ENCODE measurements at regions of chr18 and their contacts with region 1.

Region 1: DNA sequence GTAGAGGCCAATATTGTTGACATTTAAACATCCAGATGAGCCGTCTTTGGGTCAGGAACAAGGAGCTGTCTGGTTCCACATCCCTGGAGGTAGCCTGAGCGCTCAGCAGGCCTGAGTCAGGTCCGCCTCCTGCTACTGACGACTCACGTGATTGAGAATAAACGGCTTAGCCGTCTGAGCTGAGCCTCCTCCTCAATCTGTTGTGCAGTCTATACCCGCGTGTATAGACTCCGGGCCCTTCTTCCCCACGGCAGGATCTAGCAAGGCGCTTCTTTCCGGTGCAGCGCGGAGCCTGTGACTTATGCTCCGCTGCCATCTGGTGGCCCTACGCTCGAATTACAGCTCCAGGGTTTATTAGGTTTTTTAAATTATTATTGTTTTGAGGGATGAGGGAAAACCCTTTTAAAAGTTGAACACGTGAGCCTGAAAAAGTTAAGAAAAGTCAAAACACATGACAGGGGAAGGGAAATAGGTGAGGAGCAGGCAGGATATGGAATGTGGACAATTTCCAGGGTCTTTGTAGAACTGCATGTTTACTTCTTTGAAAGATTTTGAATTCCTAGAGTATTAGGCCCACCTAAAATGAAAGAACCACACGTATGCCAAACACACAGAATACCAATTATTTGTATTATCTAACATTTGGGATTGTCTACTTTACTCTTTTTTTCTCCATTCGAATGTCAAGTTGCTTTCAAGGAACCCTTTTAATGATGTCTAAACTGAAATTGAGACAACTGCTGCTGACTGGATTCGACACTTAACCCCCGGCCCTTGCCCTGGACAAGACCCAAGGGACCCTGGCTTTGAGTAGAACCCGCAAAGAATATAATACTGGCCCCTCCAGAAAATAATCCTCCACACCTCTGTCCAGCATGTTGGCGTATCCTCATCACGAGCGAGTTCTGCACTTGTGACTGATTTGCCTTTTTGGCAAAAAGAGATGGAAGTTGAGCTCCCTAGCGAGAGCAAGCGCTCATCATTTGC is 112.4 kb upstream of the ZNF236 start:
- DNase-seq: peak; percentile 75
- ATAC-seq: peak; percentile 99
- H3K4me3 Mint-ChIP-seq: no peak overlapping the region
- H3K27ac Mint-ChIP-seq: no peak overlapping the region
- H3K4me1 Mint-ChIP-seq: no peaks in the 10 kb centered on the region
- H3K27me3 Mint-ChIP-seq: peaks cover 3% of the 10 kb centered on the region
- CTCF ChIP-seq: peak; percentile 97

Region 2: DNA sequence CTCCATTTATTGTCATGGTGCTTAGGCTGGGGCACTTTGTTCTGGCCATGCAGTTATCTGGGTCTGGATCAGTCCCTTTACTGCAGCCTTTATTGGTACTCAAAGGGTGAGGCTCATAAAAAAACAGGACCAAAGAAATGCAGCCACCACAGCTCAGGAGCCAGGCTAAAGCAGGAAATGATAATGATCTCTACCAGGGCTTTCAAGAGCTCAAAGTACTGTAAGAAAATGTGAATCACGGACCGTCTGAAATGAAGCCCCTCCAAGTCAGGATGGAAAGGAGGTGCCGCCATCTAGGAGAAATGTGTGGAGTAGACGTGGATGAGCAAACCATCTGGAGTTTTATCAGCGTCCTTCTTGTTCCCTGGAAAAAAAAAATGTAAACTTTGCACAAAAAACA is 52.5 kb before region 1 on chr18:
- CTCF ChIA-PET with region 1: interaction called, 12 read pairs
- POLR2A ChIA-PET with region 1: no interaction called
- intact Hi-C with region 1: no loop called
- DNase-seq: peak; percentile 8
- ATAC-seq: peak; percentile 32
- H3K4me3 Mint-ChIP-seq: no peak overlapping the region
- H3K27ac Mint-ChIP-seq: no peak overlapping the region
- H3K4me1 Mint-ChIP-seq: peaks cover 19% of the 10 kb centered on the region
- H3K27me3 Mint-ChIP-seq: peaks cover 37% of the 10 kb centered on the region
- CTCF ChIP-seq: no peak

Region 3: DNA sequence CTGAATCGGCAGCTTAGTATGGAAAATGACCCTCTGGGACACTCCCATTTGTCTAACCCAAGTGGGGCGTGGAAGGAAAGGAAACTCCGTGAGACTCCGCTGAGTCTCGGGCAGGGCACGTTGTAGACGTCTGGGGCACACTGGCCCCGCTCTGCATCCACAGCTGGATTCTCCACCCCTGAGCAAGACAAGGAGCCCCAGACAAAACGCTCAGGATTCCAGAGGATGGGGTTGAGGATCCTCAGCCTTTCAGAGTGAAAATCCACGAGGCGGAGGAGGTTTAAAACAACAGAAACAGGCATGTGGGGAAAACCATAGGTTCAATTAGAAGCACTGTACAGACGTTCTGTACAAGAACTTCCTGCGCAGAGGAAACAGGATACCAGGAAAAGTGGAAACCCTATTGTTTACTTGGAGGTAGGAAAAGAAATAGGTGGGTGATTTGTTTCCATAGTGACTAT is 12.5 kb before region 1 on chr18:
- CTCF ChIA-PET with region 1: interaction called, 11 read pairs
- POLR2A ChIA-PET with region 1: no interaction called
- intact Hi-C with region 1: no loop called
- DNase-seq: no peak
- ATAC-seq: no peak
- H3K4me3 Mint-ChIP-seq: no peak overlapping the region
- H3K27ac Mint-ChIP-seq: no peak overlapping the region
- H3K4me1 Mint-ChIP-seq: peaks cover 5% of the 10 kb centered on the region
- H3K27me3 Mint-ChIP-seq: peaks cover 44% of the 10 kb centered on the region
- CTCF ChIP-seq: no peak

Region 4: DNA sequence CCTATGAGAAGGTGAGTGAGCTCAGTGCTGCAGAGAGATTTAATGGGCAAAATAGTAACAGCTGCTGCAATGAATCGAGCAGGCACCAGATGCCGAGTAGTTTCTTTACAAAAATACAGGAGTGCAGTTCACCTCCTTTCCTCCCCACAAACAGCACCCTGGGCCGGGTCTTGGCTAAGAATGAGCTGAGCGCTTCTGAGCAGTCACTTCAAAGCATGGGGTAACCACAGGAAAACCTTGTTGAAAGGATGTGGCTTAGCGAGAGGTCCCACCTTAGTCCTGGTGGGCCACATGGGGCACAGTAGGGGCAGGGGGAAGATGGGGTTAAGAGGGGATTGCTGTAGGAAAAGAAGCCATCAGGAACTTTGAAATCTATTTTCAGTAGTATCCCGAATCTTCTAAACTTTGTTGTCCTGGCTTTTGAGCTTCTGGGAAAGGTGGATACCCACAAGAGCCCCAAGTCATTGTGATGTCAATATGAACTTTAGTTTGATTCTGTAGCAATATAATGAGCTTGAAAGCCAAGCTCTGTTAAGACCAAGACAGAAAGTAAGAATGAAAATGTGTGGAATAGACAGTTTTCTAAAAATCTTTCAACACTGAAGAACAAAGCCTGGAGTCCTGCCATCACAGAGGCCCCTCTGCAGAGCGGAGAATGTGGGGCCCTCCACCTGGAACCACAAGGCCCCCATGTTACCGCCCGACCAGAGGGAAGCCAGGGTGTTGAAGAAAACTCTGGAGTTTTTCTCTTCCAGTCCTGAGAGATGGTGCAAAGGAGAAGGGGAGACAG is 11.4 kb after region 1 on chr18:
- CTCF ChIA-PET with region 1: interaction called, 18 read pairs
- POLR2A ChIA-PET with region 1: interaction called, 8 read pairs
- intact Hi-C with region 1: no loop called
- DNase-seq: peak; percentile 86
- ATAC-seq: peak; percentile 97
- H3K4me3 Mint-ChIP-seq: peak overlapping the region; percentile 58
- H3K27ac Mint-ChIP-seq: peak overlapping the region; percentile 47
- H3K4me1 Mint-ChIP-seq: peaks cover 32% of the 10 kb centered on the region
- H3K27me3 Mint-ChIP-seq: peaks cover 24% of the 10 kb centered on the region
- CTCF ChIP-seq: no peak